Caco-2 (cell line): ENCODE measurements at regions of chr6 and their contacts with region 1.

Region 1: GRCh38 chr6:81752138-81752920 is at the start of gene TENT5A:
- DNase-seq: peak; percentile 96
- H3K4me3 ChIP-seq: peak within 1 kb of the TSS; percentile 89
- H3K4me3 Mint-ChIP-seq: peak within 1 kb of the TSS; percentile 95
- H3K27ac Mint-ChIP-seq: peak within 1 kb of the TSS; percentile 73
- H3K4me1 ChIP-seq: peaks cover 22% of the 10 kb centered on the region
- H3K4me1 Mint-ChIP-seq: peaks cover 33% of the 10 kb centered on the region
- H3K27me3 ChIP-seq: no peaks in the 10 kb centered on the region
- H3K27me3 Mint-ChIP-seq: no peaks in the 10 kb centered on the region
- CTCF ChIP-seq: peak; percentile 18 to 44
- total RNA-seq, gene TENT5A: 45.0 and 49.6 TPM in 2 replicates

Region 2: DNA sequence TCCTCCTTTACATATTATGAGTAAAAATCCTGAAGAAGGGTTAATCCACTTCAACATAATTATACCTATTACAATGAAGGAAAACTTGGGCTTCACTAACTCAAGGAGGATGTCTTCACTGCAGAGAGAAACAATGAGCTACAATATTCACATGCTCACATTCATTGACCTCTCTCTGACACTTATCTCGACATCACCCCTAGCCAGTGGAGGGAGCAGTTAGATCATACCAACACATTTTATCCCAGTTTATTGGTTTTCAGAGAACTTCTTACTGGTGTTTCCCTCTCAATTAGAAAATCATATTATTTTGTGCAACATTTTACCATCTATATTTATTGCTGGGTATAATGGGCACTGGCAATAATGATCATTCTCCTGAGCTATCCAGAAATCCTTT is 646.3 kb before region 1 on chr6:
- CTCF ChIA-PET with region 1: no interaction called
- POLR2A ChIA-PET with region 1: no interaction called
- intact Hi-C with region 1: loop called (anchors 1 kb)
- DNase-seq: peak in 1 of 2 experiments; percentile 3
- H3K4me3 ChIP-seq: no peak overlapping the region
- H3K4me3 Mint-ChIP-seq: no peak overlapping the region
- H3K27ac Mint-ChIP-seq: no peak overlapping the region
- H3K4me1 ChIP-seq: no peaks in the 10 kb centered on the region
- H3K4me1 Mint-ChIP-seq: no peaks in the 10 kb centered on the region
- H3K27me3 ChIP-seq: no peaks in the 10 kb centered on the region
- H3K27me3 Mint-ChIP-seq: no peaks in the 10 kb centered on the region
- CTCF ChIP-seq: peak in 1 of 2 experiments; percentile 2

Region 3: GRCh38 chr6:81487489-81487888 is 264.8 kb before region 1 on chr6:
- CTCF ChIA-PET with region 1: interaction called, 11 read pairs
- POLR2A ChIA-PET with region 1: no interaction called
- intact Hi-C with region 1: loop called (anchors 5 kb)
- DNase-seq: no peak
- H3K4me3 ChIP-seq: no peak overlapping the region
- H3K4me3 Mint-ChIP-seq: no peak overlapping the region
- H3K27ac Mint-ChIP-seq: no peak overlapping the region
- H3K4me1 ChIP-seq: peaks cover 26% of the 10 kb centered on the region
- H3K4me1 Mint-ChIP-seq: peaks cover 28% of the 10 kb centered on the region
- H3K27me3 ChIP-seq: no peaks in the 10 kb centered on the region
- H3K27me3 Mint-ChIP-seq: no peaks in the 10 kb centered on the region
- CTCF ChIP-seq: no peak

Region 4: GRCh38 chr6:81614292-81614691 is 138.0 kb before region 1 on chr6:
- CTCF ChIA-PET with region 1: no interaction called
- POLR2A ChIA-PET with region 1: no interaction called
- intact Hi-C with region 1: loop called (anchors 1 kb)
- DNase-seq: peak; percentile 67 to 72
- H3K4me3 ChIP-seq: no peak overlapping the region
- H3K4me3 Mint-ChIP-seq: peak overlapping the region; percentile 20
- H3K27ac Mint-ChIP-seq: peak overlapping the region; percentile 65
- H3K4me1 ChIP-seq: peaks cover 29% of the 10 kb centered on the region
- H3K4me1 Mint-ChIP-seq: peaks cover 22% of the 10 kb centered on the region
- H3K27me3 ChIP-seq: no peaks in the 10 kb centered on the region
- H3K27me3 Mint-ChIP-seq: no peaks in the 10 kb centered on the region
- CTCF ChIP-seq: no peak

Region 5: GRCh38 chr6:81834141-81834681 is 81.9 kb after region 1 on chr6:
- CTCF ChIA-PET with region 1: interaction called, 4 read pairs
- POLR2A ChIA-PET with region 1: interaction called, 10 read pairs
- intact Hi-C with region 1: loop called (anchors 2 kb)
- DNase-seq: peak; percentile 36 to 48
- H3K4me3 ChIP-seq: no peak overlapping the region
- H3K4me3 Mint-ChIP-seq: peak overlapping the region; percentile 40
- H3K27ac Mint-ChIP-seq: peak overlapping the region; percentile 95
- H3K4me1 ChIP-seq: peaks cover 69% of the 10 kb centered on the region
- H3K4me1 Mint-ChIP-seq: peaks cover 45% of the 10 kb centered on the region
- H3K27me3 ChIP-seq: no peaks in the 10 kb centered on the region
- H3K27me3 Mint-ChIP-seq: no peaks in the 10 kb centered on the region
- CTCF ChIP-seq: no peak

Region 6: DNA sequence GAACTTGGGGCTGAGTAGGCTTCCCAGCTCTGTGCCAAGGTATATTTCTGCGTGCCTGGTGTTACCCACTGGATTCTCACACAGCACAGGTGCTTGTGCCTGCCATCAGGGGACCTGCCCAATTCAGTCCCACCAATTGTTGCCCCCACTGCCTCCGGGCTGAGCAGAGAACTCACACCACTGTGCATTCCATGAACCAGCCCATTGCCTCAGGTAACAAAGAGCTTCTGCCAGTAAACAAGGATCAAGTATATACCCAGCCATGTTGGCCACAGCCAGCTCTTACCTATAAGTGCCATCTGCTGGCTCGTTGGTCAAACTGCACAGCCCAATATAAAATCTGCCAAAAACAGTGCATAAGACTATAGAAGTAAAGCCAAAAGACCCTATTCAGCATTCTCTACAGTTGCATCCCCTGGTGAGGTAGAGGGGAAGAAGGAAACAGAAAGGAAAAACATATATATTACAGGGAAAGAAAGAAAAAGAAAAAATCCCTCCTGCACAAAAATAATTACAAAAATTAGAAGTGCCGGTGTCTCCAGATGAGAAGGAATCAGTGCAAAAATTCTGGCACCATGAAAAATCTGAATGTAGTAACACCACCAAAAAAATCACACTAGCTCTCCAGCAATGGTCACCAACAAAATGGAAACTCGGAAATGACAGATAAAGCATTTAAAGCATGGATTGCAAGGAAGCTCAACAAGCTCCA is 253.9 kb after region 1 on chr6:
- CTCF ChIA-PET with region 1: interaction called, 5 read pairs
- POLR2A ChIA-PET with region 1: no interaction called
- intact Hi-C with region 1: loop called (anchors 2 kb)
- DNase-seq: peak in 1 of 2 experiments; percentile 41
- H3K4me3 ChIP-seq: no peak overlapping the region
- H3K4me3 Mint-ChIP-seq: no peak overlapping the region
- H3K27ac Mint-ChIP-seq: no peak overlapping the region
- H3K4me1 ChIP-seq: no peaks in the 10 kb centered on the region; the same call in 1 of the 2 replicates
- H3K4me1 Mint-ChIP-seq: no peaks in the 10 kb centered on the region
- H3K27me3 ChIP-seq: no peaks in the 10 kb centered on the region
- H3K27me3 Mint-ChIP-seq: no peaks in the 10 kb centered on the region
- CTCF ChIP-seq: peak; percentile 11 to 29